ENCODE measurements at regions of chr17 and their contacts with region 1.

Region 1: DNA sequence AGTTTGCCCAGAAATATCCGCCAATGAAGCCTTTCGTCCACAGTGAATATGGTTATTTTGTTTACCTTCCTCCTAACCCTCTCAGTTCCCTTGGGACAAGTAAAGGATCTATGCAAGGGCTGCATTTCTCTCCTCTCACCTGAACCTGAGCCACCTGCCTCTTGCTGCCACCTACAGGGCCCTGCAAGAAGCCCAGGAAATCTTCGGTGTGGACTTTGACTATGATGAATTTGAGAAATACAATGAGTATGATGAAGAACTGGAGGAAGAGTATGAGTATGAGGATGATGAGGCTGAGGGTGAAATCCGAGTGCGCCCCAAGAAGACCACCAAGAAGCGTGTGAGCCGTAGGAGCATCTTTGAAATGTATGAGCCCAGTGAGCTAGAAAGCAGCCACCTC is 14.0 kb downstream of the SUPT6H start:
- DNase-seq: peak in 2 of 35 experiments; percentile 8 to 32
- ATAC-seq: no peak
- H3K4me3 ChIP-seq: no peak overlapping the region
- H3K4me3 Mint-ChIP-seq: no peak overlapping the region
- H3K27ac ChIP-seq: no peak overlapping the region
- H3K27ac Mint-ChIP-seq: no peak overlapping the region
- H3K4me1 ChIP-seq: no peaks in the 10 kb centered on the region
- H3K4me1 Mint-ChIP-seq: peaks cover 0 to 3% (median 0%) of the 10 kb centered on the region in 3 donors
- H3K27me3 ChIP-seq: no peaks in the 10 kb centered on the region
- H3K27me3 Mint-ChIP-seq: no peaks in the 10 kb centered on the region

Region 2: DNA sequence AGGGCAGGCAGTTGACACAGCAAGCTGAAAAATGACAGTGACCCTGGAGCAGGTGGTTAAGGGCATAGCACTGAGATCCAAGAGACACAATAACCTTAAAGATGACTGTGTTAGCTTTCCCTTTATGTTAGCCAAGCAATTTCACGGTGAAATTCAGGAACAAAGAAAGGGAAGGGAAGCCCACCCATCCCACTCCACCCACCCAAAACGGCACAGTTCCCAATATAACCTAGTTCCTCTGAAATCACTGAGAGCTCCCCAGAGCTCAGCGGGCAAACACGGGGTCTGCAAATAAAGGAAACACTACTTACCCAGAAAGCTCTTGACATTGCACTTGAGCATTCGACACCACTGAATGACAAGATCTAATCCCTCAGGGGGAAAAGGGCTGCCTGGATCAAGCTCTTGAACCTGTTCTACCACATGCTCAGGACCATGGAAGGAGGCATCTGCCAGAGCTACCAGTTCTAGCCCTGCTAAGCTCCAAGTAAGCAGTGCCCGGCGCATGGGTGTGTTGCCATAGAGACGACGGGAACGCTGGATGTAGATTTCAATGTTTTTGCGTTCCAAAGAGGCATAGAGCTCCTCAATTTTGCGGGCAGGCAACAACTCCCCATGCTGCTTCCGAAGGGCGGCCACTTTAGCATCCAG is 41.6 kb before region 1 on chr17:
- CTCF ChIA-PET with region 1: no interaction called
- POLR2A ChIA-PET with region 1: interaction called in 1 of 2 experiments, 11 read pairs
- DNase-seq: no peak
- ATAC-seq: no peak
- H3K4me3 ChIP-seq: no peak overlapping the region
- H3K4me3 Mint-ChIP-seq: no peak overlapping the region
- H3K27ac ChIP-seq: no peak overlapping the region
- H3K27ac Mint-ChIP-seq: no peak overlapping the region
- H3K4me1 ChIP-seq: peaks cover 0 to 6% of the 10 kb centered on the region in 2 experiments
- H3K4me1 Mint-ChIP-seq: peaks cover 14 to 35% (median 23%) of the 10 kb centered on the region in 3 donors
- H3K27me3 ChIP-seq: no peaks in the 10 kb centered on the region
- H3K27me3 Mint-ChIP-seq: no peaks in the 10 kb centered on the region

Region 3: GRCh38 chr17:28688481-28688880 is 12.5 kb after region 1 on chr17:
- CTCF ChIA-PET with region 1: interaction called in 1 of 2 experiments, 3 read pairs
- POLR2A ChIA-PET with region 1: interaction called in 1 of 2 experiments, 22 read pairs
- DNase-seq: no peak
- ATAC-seq: no peak
- H3K4me3 ChIP-seq: no peak overlapping the region
- H3K4me3 Mint-ChIP-seq: no peak overlapping the region
- H3K27ac ChIP-seq: no peak overlapping the region
- H3K27ac Mint-ChIP-seq: no peak overlapping the region
- H3K4me1 ChIP-seq: no peaks in the 10 kb centered on the region
- H3K4me1 Mint-ChIP-seq: no peaks in the 10 kb centered on the region
- H3K27me3 ChIP-seq: no peaks in the 10 kb centered on the region
- H3K27me3 Mint-ChIP-seq: no peaks in the 10 kb centered on the region

Region 4: DNA sequence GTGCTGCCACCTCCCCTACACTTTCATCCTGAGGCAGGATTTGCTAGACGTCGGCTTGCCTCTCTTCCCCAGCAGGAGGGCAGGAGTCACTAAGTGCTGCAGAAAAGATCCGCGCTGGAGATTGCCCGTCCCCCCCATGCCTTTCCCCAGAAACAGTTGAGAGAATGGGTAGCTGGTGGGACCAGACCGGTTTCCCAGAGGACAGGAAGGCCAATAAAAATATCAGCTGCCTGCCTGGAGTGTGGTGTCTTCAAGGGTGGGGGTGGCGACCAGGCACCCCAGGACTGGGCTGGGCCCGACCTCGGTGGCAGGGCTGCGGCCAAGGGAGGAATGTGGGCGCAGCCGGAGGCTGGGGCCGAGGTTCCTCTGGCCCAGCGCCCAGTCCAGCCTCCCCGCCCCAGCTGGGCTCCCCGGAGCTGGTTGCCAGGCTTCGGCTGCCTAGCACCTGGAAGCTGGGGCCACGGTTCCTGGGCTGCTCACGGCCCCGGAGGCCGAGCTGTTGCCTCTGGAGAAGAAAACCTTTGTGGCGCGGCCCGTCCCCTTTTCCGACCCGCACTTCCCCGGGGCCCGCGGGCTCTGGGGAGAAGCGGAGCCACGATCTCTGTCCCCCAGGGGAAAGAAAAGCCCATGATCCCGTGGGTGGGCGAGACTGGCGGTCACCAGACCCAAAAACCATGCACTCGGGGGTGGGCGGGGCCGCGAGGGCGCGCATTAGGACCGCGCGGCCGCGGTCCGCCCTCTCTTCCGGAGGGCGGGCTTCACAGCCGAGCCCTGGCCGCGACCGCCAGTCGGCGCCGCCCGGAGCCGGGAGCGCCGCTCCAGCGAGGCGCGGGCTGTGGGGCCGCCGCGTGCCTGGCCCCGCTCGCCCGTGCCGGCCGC is 67.5 kb after region 1 on chr17 and contains the start of gene TRAF4:
- CTCF ChIA-PET with region 1: no interaction called
- POLR2A ChIA-PET with region 1: no interaction called
- DNase-seq: peak; percentile 40 to 88 (median 65)
- ATAC-seq: peak; percentile 89 to 94 (median 90)
- H3K4me3 ChIP-seq: peak within 1 kb of the TSS; percentile 76 to 89
- H3K4me3 Mint-ChIP-seq: peak within 1 kb of the TSS; percentile 80 to 87 (median 82)
- H3K27ac ChIP-seq: peak within 1 kb of the TSS; percentile 86
- H3K27ac Mint-ChIP-seq: peak within 1 kb of the TSS; percentile 73 to 82
- H3K4me1 ChIP-seq: peaks cover 25 to 58% of the 10 kb centered on the region in 2 experiments
- H3K4me1 Mint-ChIP-seq: peaks cover 15 to 44% (median 24%) of the 10 kb centered on the region in 3 donors
- H3K27me3 ChIP-seq: no peaks in the 10 kb centered on the region
- H3K27me3 Mint-ChIP-seq: no peaks in the 10 kb centered on the region
- total RNA-seq, gene TRAF4: 37.5 to 226 (median 42.5) TPM

Measured in T-cell (primary cell).